Activated CD4-positive, alpha-beta T cell treated with anti-CD3 and anti-CD28 coated beads for 36 hours (primary cell): ENCODE measurements at regions of chr2 and their contacts with region 1.

Region 1: GRCh38 chr2:211035548-211036185 is 479.3 kb downstream of the CPS1 start:
- DNase-seq: no peak
- ATAC-seq: no peak
- H3K4me3 Mint-ChIP-seq: no peak overlapping the region
- H3K27ac Mint-ChIP-seq: no peak overlapping the region
- H3K4me1 Mint-ChIP-seq: no peaks in the 10 kb centered on the region
- H3K27me3 Mint-ChIP-seq: peaks cover 2% of the 10 kb centered on the region

Region 2: GRCh38 chr2:210147614-210148013 is 888.1 kb before region 1 on chr2:
- CTCF ChIA-PET with region 1: no interaction called
- POLR2A ChIA-PET with region 1: no interaction called
- intact Hi-C with region 1: no loop called
- DNase-seq: no peak
- ATAC-seq: no peak
- H3K4me3 Mint-ChIP-seq: no peak overlapping the region
- H3K27ac Mint-ChIP-seq: no peak overlapping the region
- H3K4me1 Mint-ChIP-seq: no peaks in the 10 kb centered on the region
- H3K27me3 Mint-ChIP-seq: no peaks in the 10 kb centered on the region

Region 3: GRCh38 chr2:210399440-210400041 is 636.1 kb before region 1 on chr2:
- CTCF ChIA-PET with region 1: no interaction called
- POLR2A ChIA-PET with region 1: no interaction called
- intact Hi-C with region 1: no loop called
- DNase-seq: no peak
- ATAC-seq: no peak
- H3K4me3 Mint-ChIP-seq: no peak overlapping the region
- H3K27ac Mint-ChIP-seq: no peak overlapping the region
- H3K4me1 Mint-ChIP-seq: no peaks in the 10 kb centered on the region
- H3K27me3 Mint-ChIP-seq: peaks cover 7% of the 10 kb centered on the region

Region 4: DNA sequence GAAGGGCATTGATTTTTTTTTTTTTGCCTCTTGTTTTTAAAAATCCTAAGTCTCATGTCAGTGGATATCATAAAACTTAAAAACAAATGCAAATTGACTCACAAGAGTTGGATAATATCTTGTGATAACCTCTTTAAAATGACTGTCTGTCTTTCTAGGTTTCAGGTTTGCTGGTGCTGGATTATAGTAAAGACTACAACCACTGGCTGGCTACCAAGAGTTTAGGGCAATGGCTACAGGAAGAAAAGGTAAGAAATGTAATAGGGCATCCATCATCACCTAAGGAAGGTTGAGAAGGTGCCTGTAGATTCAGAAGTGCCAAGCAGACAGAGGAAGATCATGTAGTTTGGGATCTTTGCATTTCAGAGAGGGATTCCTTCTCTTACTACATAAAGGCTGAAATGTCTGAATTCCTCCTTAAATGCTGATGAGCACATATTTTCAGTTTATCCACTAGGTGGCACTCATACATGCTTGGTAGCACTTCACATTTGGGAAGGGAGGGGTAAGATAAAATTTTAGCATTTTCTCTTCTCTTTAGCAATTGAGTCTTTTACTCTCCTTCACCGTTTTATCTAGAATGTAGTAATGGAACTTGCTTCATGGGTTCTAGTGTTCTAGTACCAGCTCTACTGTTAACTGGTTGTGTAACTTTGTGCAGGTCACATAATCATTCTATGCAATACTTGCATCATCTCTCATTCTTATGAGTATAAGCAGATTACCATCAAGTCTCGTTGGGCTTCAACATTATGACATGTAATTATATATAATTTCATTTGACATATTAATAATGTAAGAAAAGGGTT is 458.2 kb before region 1 on chr2:
- CTCF ChIA-PET with region 1: no interaction called
- POLR2A ChIA-PET with region 1: no interaction called
- intact Hi-C with region 1: loop called in 1 of 2 experiments (anchors 1 kb)
- DNase-seq: no peak
- ATAC-seq: no peak
- H3K4me3 Mint-ChIP-seq: no peak overlapping the region
- H3K27ac Mint-ChIP-seq: no peak overlapping the region
- H3K4me1 Mint-ChIP-seq: no peaks in the 10 kb centered on the region
- H3K27me3 Mint-ChIP-seq: peaks cover 2% of the 10 kb centered on the region

Region 5: DNA sequence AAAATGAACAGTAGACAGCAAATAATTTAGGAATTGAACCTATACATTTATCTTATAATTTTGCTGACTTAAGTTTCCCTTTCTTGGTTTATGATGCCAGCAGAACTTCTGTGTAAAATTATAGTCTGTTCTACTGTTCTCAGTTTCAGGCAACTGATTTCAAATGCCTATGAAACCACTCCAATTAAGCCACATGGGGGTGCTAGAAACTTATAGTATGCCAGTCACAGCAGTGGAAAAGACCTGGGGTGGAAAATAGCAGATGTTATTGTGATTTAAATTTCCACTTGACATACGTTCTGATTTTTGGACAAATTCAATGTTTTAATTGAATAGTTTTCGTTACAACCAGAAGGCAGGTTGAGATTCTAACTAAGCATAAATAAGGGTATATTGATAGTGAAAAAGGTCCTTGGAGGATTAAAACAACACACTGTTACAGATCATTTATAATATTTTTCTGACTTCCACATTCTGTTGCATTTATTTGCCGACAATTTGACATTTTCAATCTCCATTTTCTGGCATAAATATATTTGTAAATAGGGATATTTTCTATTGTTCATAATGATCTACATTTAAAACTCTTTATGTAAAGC is 417.8 kb before region 1 on chr2:
- CTCF ChIA-PET with region 1: no interaction called
- POLR2A ChIA-PET with region 1: no interaction called
- intact Hi-C with region 1: loop called in 1 of 2 experiments (anchors 1 kb)
- DNase-seq: peak; percentile 6
- ATAC-seq: no peak
- H3K4me3 Mint-ChIP-seq: no peak overlapping the region
- H3K27ac Mint-ChIP-seq: no peak overlapping the region
- H3K4me1 Mint-ChIP-seq: no peaks in the 10 kb centered on the region
- H3K27me3 Mint-ChIP-seq: no peaks in the 10 kb centered on the region

Region 6: DNA sequence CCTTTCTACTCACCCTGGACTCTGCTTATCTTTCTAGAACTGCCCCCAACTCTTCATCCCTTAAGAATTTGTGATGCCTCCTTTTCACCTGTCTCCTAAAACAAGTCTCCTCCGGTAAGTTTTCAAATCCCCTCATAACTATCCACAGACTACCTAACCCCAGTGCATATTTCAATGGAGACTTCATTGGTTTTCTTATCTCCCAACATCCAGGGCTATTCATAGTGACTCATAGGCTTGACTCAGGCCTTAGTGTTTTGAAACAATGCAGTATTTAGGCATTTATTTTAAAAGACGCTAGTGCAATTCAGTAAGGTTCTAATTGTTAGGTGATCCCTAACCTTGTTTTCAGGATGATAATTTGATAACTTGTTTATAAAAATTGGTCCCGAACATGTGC is 80.1 kb before region 1 on chr2:
- CTCF ChIA-PET with region 1: no interaction called
- POLR2A ChIA-PET with region 1: no interaction called
- intact Hi-C with region 1: no loop called
- DNase-seq: no peak
- ATAC-seq: no peak
- H3K4me3 Mint-ChIP-seq: no peak overlapping the region
- H3K27ac Mint-ChIP-seq: no peak overlapping the region
- H3K4me1 Mint-ChIP-seq: no peaks in the 10 kb centered on the region
- H3K27me3 Mint-ChIP-seq: no peaks in the 10 kb centered on the region